ENCODE measurements at regions of chr2 and their contacts with region 1.

Region 1: DNA sequence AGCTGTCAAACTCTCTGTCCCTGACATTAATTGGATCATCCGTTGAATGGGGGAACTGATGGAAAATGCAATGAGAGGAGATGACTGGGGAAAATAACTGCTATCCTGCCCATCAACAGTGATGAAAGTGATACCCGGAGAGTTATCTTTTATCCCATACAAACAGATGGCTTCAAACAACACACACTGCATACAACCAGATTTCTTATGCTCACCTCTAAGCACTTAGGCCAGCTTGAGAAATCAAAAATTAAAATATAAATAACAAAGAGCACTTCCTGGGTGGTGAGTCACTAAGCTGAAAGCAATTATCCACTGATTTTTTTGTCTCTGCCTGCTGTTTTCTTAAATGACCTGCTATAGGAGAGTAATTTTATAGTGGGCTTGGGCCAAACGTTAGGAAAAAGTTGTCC is 237.6 kb upstream of the RGPD4 start:
- DNase-seq: peak; percentile 28
- H3K4me3 Mint-ChIP-seq: no peak overlapping the region
- H3K27ac Mint-ChIP-seq: no peak overlapping the region
- H3K4me1 Mint-ChIP-seq: peaks cover 29% of the 10 kb centered on the region
- H3K27me3 Mint-ChIP-seq: no peaks in the 10 kb centered on the region
- CTCF ChIP-seq: no peak

Region 2: GRCh38 chr2:107281637-107282036 is 307.4 kb before region 1 on chr2:
- CTCF ChIA-PET with region 1: no interaction called
- POLR2A ChIA-PET with region 1: no interaction called
- intact Hi-C with region 1: no loop called
- DNase-seq: no peak
- H3K4me3 Mint-ChIP-seq: no peak overlapping the region
- H3K27ac Mint-ChIP-seq: no peak overlapping the region
- H3K4me1 Mint-ChIP-seq: peaks cover 6% of the 10 kb centered on the region
- H3K27me3 Mint-ChIP-seq: no peaks in the 10 kb centered on the region
- CTCF ChIP-seq: no peak

Region 3: GRCh38 chr2:107621186-107622165 is 32.4 kb after region 1 on chr2:
- CTCF ChIA-PET with region 1: no interaction called
- POLR2A ChIA-PET with region 1: no interaction called
- intact Hi-C with region 1: no loop called
- DNase-seq: no peak
- H3K4me3 Mint-ChIP-seq: no peak overlapping the region
- H3K27ac Mint-ChIP-seq: no peak overlapping the region
- H3K4me1 Mint-ChIP-seq: no peaks in the 10 kb centered on the region
- H3K27me3 Mint-ChIP-seq: no peaks in the 10 kb centered on the region
- CTCF ChIP-seq: no peak

Region 4: GRCh38 chr2:107633580-107634147 is 44.6 kb after region 1 on chr2:
- CTCF ChIA-PET with region 1: no interaction called
- POLR2A ChIA-PET with region 1: no interaction called
- intact Hi-C with region 1: loop called (anchors 5 kb)
- DNase-seq: peak; percentile 88
- H3K4me3 Mint-ChIP-seq: no peak overlapping the region
- H3K27ac Mint-ChIP-seq: peak overlapping the region; percentile 44
- H3K4me1 Mint-ChIP-seq: peaks cover 16% of the 10 kb centered on the region
- H3K27me3 Mint-ChIP-seq: no peaks in the 10 kb centered on the region
- CTCF ChIP-seq: no peak